A673 (cell line): ENCODE measurements at regions of chr19 and their contacts with region 1.

Region 1: GRCh38 chr19:39532233-39533002 is at the start of gene EID2B:
- DNase-seq: peak; percentile 97
- H3K4me3 ChIP-seq: peak within 1 kb of the TSS; percentile 81
- H3K27ac ChIP-seq: peak within 1 kb of the TSS; percentile 60
- H3K4me1 ChIP-seq: peaks cover 10% of the 10 kb centered on the region
- H3K27me3 ChIP-seq: no peaks in the 10 kb centered on the region
- CTCF ChIP-seq: peak; percentile 94
- total RNA-seq, gene EID2B: 3.4 and 4.2 TPM in 2 replicates

Region 2: DNA sequence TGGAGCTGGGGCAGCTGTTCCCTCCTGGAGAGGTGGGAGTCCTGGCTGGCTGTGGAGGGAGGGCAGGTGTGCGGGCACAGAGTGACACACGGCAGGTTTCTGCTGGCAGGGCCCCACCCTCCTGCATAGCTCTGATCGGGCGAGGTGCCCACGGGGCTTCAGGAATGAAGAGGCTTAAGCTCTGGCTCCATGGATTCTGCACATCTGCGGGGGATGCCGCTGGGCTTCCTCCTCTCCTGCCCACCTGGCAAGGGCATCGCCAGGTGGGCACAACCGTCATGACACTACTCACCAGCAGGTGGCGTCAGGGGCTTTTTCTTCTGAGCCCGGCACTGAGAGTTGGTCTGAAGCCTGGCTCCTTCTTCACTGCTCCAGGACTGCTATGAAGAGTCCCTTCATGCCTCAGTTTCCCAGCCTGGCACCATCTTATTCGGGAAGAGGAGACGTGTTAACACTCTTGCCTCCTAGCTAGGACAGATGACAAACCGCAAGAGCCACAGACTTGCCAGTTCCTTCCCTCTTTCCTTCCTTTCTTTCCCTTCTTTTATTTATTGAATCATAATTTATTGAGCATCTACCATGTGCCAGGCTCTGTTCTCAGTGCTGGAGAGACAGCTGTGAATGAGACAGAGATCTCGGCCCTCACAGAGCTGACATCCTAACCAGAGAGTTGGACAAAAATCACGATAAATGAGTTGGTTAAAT is 422.0 kb before region 1 on chr19:
- CTCF ChIA-PET with region 1: no interaction called
- POLR2A ChIA-PET with region 1: no interaction called
- intact Hi-C with region 1: loop called (anchors 10 kb)
- DNase-seq: peak; percentile 60
- H3K4me3 ChIP-seq: no peak overlapping the region
- H3K27ac ChIP-seq: no peak overlapping the region
- H3K4me1 ChIP-seq: no peaks in the 10 kb centered on the region
- H3K27me3 ChIP-seq: no peaks in the 10 kb centered on the region
- CTCF ChIP-seq: peak; percentile 89

Region 3: DNA sequence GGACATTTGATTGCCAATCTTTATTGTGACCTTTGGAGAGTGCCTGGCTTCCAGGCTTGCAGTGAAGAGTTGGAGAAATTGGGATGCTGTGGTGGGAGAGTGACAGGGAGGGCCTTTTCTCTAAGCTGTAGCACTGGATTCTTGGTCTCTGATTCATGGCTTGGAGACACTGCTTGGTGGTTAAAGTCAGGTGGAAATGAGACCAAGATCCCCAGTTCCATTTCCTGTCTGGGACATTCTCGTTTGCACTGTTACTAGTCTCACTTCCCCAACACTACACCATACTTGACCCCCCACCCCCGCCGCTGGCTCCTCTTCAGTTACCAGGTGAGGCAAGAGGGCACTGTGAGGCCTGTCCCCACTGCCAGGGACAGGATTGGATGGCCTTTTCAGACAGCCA is 84.1 kb before region 1 on chr19:
- CTCF ChIA-PET with region 1: no interaction called
- POLR2A ChIA-PET with region 1: no interaction called
- intact Hi-C with region 1: no loop called
- DNase-seq: no peak
- H3K4me3 ChIP-seq: no peak overlapping the region
- H3K27ac ChIP-seq: no peak overlapping the region
- H3K4me1 ChIP-seq: peaks cover 10% of the 10 kb centered on the region
- H3K27me3 ChIP-seq: no peaks in the 10 kb centered on the region
- CTCF ChIP-seq: no peak

Region 4: DNA sequence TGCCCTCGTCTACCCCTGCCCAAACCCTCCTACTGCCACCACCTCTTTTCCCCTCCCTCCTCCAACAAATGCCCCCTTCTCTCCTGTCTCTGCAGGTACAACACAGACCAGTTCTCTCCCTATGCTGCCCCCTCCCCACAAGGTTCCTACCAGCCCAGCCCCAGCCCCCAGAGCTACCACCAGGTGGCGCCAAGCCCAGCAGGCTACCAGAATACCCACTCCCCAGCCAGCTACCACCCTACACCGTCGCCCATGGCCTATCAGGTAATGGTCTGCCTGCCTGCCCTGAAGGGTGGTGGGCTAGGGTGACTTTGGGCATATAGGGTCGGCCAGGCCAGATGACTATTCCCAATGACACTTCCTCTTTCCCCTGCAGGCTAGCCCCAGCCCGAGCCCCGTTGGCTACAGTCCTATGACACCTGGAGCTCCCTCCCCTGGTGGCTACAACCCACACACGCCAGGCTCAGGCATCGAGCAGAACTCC is 58.2 kb before region 1 on chr19:
- CTCF ChIA-PET with region 1: no interaction called
- POLR2A ChIA-PET with region 1: no interaction called
- intact Hi-C with region 1: loop called (anchors 5 kb)
- DNase-seq: peak; percentile 62
- H3K4me3 ChIP-seq: no peak overlapping the region
- H3K27ac ChIP-seq: no peak overlapping the region
- H3K4me1 ChIP-seq: no peaks in the 10 kb centered on the region
- H3K27me3 ChIP-seq: no peaks in the 10 kb centered on the region
- CTCF ChIP-seq: peak; percentile 93

Region 5: DNA sequence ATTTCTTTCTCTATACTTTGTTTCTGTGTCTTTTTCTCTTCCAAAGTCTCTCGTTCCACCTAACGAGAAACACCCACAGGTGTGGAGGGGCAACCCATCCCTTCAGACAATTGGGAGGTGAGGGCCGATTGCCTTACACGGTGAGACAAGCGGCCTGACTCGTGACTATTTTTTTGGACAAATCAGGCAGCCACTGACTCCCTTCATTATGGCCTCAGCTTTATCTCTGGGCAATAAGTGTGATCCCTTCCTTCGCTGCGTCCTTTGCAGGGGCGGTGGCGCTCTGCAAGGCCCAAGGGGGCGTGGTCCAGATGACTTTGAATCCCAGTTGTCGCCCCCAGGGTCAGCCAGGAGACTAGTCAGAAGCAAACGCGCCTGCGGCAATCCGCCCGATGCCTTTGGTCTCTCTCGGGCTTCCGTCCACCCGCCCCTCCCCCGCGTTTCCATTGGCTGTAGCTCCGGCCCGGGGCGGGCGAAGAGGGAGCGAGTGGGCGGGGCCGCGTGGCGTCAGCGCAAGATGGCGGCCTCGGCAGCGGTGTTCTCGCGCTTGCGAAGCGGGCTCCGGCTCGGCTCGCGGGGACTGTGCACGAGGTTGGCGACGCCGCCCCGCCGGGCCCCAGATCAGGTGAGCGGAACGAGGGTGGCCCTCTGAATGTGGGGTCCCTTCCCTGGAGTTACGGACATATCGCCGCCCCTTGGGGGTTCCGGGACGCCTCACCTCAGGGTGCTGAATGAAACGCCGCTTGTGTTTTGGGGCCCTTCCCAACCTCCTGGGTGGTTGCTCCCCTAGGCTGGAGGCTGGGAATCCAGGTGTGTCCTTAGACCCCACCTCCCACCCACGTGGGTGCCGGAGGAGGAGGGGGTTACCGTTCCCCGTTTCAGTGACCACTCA is 51.8 kb before region 1 on chr19 and contains the start of gene TIMM50:
- CTCF ChIA-PET with region 1: no interaction called
- POLR2A ChIA-PET with region 1: no interaction called
- intact Hi-C with region 1: loop called (anchors 2 kb)
- DNase-seq: peak; percentile 98
- H3K4me3 ChIP-seq: peak within 1 kb of the TSS; percentile 95
- H3K27ac ChIP-seq: peak within 1 kb of the TSS; percentile 92
- H3K4me1 ChIP-seq: peaks cover 11% of the 10 kb centered on the region
- H3K27me3 ChIP-seq: no peaks in the 10 kb centered on the region
- CTCF ChIP-seq: 0 out of 2 replicates have a peak, but pooled peaks have one; percentile 12
- total RNA-seq, gene TIMM50: 165 and 174 TPM in 2 replicates